ENCODE measurements at regions of chr17 and their contacts with region 1.

Region 1: DNA sequence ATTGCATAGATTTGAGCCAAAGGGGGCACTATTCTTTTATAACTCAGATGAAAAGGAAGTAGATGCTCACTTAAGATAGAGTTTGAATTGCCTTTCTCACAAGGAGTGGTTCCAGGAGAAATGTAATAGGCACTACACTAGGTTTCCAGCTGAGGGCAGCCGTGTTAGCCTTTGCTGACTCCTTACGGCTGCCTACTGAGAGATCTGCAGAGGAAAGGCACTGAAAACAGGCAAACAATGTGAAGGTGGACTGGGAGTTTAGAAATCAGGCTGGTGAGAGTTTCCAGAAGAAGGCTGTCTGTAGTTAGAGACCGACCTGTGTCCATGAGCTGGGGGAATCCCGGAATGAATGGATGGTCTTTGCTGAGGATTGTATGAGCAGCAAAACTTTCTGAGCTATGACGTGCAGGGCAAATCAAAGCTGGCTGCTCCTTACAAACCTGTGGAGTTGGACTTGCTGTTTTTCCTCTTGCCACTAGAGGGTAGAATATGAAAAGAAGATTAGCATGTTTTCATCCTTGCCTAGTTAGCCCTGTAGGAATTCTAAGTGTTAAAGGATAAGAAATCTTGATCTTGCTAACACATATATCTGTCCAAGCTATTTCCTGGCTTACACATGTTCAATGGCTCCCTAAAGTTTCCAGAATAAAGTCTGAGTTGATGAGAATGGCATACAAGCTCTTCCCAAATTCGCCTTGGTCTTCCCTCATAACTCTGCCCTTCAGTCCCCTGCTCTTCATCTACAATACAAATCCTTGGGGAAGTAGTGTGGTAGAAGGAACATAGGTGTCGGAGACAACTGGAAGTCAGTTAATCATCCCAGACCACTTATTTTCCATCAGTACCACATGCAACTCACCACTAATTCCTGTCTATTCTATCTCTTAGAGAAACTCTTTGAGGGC is 20.1 kb upstream of the TAOK1 start:
- DNase-seq: peak; percentile 38
- H3K4me3 ChIP-seq: peak overlapping the region; percentile 40
- CTCF ChIP-seq: peak; percentile 79

Region 2: GRCh38 chr17:29059281-29059680 is 310.8 kb before region 1 on chr17:
- CTCF ChIA-PET with region 1: no interaction called
- POLR2A ChIA-PET with region 1: no interaction called
- DNase-seq: peak; percentile 14
- H3K4me3 ChIP-seq: no peak overlapping the region
- CTCF ChIP-seq: no peak

Region 3: GRCh38 chr17:29357821-29358232 is 12.3 kb before region 1 on chr17:
- CTCF ChIA-PET with region 1: interaction called, 37 read pairs
- POLR2A ChIA-PET with region 1: no interaction called
- DNase-seq: no peak
- H3K4me3 ChIP-seq: no peak overlapping the region
- CTCF ChIP-seq: no peak

Region 4: DNA sequence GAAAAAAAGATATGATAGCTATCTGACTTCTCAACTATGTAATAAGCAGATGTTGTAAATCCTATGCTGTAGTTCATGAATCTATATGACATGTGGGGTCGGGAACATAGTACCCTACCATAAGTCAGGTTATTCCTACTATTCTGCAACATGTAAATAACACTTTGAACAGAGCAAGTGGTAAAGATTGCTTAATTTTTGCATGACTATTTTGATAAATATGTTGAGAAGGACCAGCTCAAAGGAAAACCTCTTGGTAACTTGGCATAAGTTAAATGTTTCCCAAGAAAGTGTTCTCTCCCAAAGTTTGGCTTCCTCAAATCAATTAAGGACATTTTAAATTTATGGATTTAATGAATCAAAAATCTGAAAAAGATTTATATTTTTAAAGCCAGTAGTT is 134.6 kb after region 1 on chr17:
- CTCF ChIA-PET with region 1: interaction called, 32 read pairs
- POLR2A ChIA-PET with region 1: no interaction called
- DNase-seq: no peak
- H3K4me3 ChIP-seq: no peak overlapping the region
- CTCF ChIP-seq: no peak

Region 5: DNA sequence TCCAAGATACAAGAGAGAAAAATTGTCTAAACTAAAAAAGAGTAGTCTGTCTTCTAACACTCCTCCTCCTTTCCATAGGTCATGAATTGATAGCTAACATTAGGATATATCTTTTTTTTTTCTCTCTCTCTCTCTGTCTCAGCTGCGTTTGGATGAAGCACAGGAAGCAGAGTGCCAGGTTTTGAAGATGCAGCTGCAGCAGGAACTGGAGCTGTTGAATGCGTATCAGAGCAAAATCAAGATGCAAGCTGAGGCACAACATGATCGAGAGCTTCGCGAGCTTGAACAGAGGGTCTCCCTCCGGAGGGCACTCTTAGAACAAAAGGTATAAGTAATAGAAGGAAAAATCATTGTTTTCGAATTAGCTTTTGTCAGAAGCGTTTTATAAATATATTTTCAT is 163.9 kb after region 1 on chr17:
- CTCF ChIA-PET with region 1: interaction called, 152 read pairs
- POLR2A ChIA-PET with region 1: no interaction called
- DNase-seq: no peak
- H3K4me3 ChIP-seq: no peak overlapping the region
- CTCF ChIP-seq: no peak

Region 6: DNA sequence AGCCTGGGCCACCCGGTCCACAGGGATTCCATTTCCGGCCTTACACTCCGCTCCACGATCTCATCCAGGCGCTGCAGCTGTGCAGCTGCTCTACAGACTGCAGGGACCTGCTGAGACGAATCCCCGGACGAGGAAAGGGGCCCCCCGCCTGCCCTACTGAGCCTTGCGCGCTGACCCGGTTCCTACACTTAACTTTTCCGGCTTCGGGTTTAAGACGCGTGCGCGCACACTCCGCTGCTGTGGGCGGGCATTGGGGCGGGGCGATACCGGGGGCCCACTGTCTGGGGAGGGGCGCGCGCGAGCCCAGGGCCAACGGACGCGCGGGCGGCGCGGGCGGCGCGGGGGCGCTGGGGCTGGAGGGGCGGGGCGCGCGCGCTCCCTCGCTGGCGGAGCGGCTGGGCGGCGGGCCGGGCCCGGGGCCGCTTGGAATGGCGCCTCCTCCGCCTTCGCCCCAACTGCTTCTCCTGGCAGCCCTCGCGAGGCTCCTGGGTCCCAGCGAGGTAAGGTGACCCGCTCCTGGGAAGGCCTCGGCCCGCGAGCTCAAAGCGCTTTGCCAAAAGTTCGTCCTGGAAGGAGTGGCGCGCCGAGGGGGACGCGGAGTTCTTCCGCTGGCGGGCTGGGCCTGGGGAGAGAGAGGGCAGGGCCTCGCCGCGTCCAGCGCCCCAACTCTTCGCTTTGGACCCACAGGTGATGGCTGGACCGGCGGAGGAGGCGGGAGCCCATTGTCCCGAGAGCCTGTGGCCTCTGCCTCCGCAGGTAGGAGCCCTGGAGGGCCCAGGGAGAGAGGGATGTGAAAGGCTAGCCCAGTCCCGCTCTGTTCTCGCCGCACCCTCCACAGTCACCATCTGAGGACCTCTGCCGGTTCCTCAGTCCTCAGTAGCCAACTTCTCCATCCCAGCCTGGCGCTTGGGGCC is 198.5 kb after region 1 on chr17 and contains the start of gene TP53I13:
- CTCF ChIA-PET with region 1: interaction called, 222 read pairs
- POLR2A ChIA-PET with region 1: no interaction called
- DNase-seq: no peak
- H3K4me3 ChIP-seq: peak within 1 kb of the TSS; percentile 77
- CTCF ChIP-seq: no peak

Region 7: DNA sequence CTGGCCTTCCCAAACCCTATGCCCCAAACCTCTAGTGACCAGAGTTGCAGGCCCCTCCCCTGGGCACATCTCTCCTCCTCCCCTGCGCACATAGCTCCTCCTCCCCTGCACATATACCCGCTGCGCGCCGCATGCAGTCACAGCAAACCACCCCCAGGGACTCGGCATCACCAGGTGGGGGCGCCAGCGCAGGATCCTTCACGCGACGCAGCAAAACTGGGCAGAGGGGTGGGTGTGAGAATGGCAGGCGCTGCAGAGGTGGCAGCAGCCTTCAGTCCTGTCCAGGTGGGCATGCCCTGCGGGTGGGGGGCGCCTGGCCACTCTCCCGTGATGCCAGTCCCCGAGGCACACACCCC is 247.0 kb after region 1 on chr17:
- CTCF ChIA-PET with region 1: interaction called, 16 read pairs
- POLR2A ChIA-PET with region 1: no interaction called
- DNase-seq: no peak
- H3K4me3 ChIP-seq: peak overlapping the region; percentile 12; the same call in 1 of the 2 replicates
- CTCF ChIP-seq: peak; percentile 87

Measured in AG04449 (cell line).